ENCODE measurements at regions of chr16 and their contacts with region 1.

Region 1: DNA sequence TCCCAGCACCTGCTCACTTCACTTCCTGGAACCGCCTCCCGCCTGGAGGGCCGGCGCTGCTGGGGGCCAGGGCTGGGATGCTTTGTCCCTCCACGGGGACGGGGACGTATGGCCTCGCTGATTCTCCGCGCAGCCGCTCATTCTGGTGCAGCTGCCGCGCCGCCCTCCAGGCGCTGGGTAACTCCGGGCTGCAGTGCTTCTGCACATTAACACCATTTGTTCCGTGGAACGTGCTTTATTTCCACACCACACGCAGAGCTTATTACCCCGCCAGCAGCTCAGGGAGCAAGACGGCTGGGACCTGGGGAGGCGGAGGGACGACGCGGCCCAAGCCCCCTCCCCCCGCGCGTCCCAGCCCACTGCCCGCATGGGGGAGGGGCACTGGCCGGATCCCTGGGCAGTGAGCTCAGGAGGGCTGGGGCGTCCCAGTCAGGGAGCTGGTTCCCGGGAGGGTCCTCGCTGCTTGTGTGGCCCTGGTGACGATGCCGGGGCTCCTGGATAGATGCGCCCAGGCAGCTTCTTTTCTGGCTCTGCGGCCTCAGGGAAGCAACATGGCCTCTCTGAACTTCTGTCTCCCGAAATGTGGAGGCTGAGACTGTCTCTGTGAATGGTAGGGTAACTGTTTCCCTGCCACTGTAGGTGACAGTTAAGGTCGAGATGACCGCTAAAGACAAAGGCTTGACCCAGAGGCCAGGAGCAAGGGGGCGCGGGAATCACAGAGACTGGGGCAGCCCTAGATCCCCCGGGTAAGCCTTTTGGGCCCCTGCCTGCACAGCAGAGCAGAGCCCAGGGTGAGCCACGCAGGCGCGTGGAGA is 45.4 kb upstream of the ACSF3 start:
- DNase-seq: no peak
- ATAC-seq: no peak
- H3K4me3 ChIP-seq: no peak overlapping the region
- H3K27ac ChIP-seq: no peak overlapping the region
- H3K4me1 ChIP-seq: no peaks in the 10 kb centered on the region
- H3K27me3 ChIP-seq: peaks cover 47% of the 10 kb centered on the region
- CTCF ChIP-seq: no peak
- POLR2A ChIP-seq: no peak
- RAD21 ChIP-seq: no peak

Region 2: GRCh38 chr16:89060207-89060794 is 12.0 kb after region 1 on chr16:
- CTCF ChIA-PET with region 1: no interaction called
- POLR2A ChIA-PET with region 1: interaction called, 12 read pairs
- dilution Hi-C with region 1: no loop called
- in situ Hi-C with region 1: no loop called
- intact Hi-C with region 1: no loop called
- DNase-seq: no peak
- ATAC-seq: no peak
- H3K4me3 ChIP-seq: no peak overlapping the region
- H3K27ac ChIP-seq: no peak overlapping the region
- H3K4me1 ChIP-seq: no peaks in the 10 kb centered on the region
- H3K27me3 ChIP-seq: peaks cover 24% of the 10 kb centered on the region
- CTCF ChIP-seq: no peak
- POLR2A ChIP-seq: no peak
- RAD21 ChIP-seq: no peak

Region 3: GRCh38 chr16:89071686-89072547 is 23.6 kb after region 1 on chr16:
- CTCF ChIA-PET with region 1: no interaction called
- POLR2A ChIA-PET with region 1: no interaction called
- dilution Hi-C with region 1: no loop called
- in situ Hi-C with region 1: no loop called
- intact Hi-C with region 1: no loop called
- DNase-seq: no peak
- ATAC-seq: no peak
- H3K4me3 ChIP-seq: no peak overlapping the region
- H3K27ac ChIP-seq: no peak overlapping the region
- H3K4me1 ChIP-seq: no peaks in the 10 kb centered on the region
- H3K27me3 ChIP-seq: peaks cover 15% of the 10 kb centered on the region; the same call in 1 of the 2 replicates
- CTCF ChIP-seq: no peak
- POLR2A ChIP-seq: no peak
- RAD21 ChIP-seq: no peak

Region 4: DNA sequence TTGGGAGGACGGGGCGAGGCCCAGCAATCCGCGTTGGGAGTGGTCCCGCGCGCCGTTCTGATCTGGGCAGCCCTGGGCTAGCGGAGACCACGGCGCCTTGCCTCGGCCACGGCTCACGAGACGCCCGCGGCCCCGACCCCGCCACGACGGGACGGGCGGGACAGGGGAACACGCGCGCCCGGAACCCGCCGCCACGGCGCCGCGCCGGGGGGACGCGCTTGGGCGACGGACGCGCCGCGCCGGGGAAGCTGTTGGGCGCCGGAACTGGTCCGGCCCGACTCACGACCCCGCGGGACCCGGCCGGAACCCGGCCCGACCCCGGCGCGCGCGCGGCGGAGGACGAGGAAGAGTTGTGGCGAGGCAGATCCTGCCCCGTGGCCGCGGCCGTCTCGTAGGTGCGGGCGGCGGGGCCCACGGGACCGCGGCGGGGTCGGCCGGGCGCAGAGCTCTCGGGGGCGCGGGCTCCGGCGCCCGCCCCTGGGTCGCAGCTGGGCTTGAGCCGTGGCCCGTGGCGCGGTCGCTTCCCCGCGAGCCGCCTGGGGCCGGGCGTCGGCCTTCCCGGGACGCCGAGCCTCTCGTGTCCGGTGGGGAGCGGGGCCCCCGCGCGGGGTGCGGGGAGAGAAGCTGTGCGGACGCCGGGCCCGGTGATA is 45.4 kb after region 1 on chr16 and contains the start of gene ACSF3:
- CTCF ChIA-PET with region 1: no interaction called
- POLR2A ChIA-PET with region 1: no interaction called
- dilution Hi-C with region 1: no loop called
- in situ Hi-C with region 1: no loop called
- intact Hi-C with region 1: no loop called
- DNase-seq: peak; percentile 41
- ATAC-seq: peak; percentile 97
- H3K4me3 ChIP-seq: peak within 1 kb of the TSS; percentile 82
- H3K27ac ChIP-seq: peak within 1 kb of the TSS; percentile 63
- H3K4me1 ChIP-seq: 0 out of 2 replicates have a peak, but pooled peaks cover 2% of the 10 kb centered on the region
- H3K27me3 ChIP-seq: peaks cover 23% of the 10 kb centered on the region
- CTCF ChIP-seq: no peak
- POLR2A ChIP-seq: peak; percentile 35; the same call in 1 of the 2 replicates
- RAD21 ChIP-seq: no peak
- total RNA-seq, gene ACSF3: 9.5 and 10.6 TPM in 2 replicates

Measured in IMR-90 (cell line).